Activated CD4-positive, alpha-beta T cell treated with anti-CD3 and anti-CD28 coated beads, Interleukin-2, amount 10 ng/mL, durations not matched to agents 7 days and 5 days (primary cell): ENCODE measurements at regions of chr12 and their contacts with region 1.

Region 1: GRCh38 chr12:110301065-110301806 is 20.2 kb downstream of the ATP2A2 start:
- DNase-seq: no peak
- H3K4me3 Mint-ChIP-seq: no peak overlapping the region
- H3K27ac Mint-ChIP-seq: no peak overlapping the region
- H3K4me1 Mint-ChIP-seq: peaks cover 38% of the 10 kb centered on the region
- H3K27me3 Mint-ChIP-seq: no peaks in the 10 kb centered on the region

Region 2: DNA sequence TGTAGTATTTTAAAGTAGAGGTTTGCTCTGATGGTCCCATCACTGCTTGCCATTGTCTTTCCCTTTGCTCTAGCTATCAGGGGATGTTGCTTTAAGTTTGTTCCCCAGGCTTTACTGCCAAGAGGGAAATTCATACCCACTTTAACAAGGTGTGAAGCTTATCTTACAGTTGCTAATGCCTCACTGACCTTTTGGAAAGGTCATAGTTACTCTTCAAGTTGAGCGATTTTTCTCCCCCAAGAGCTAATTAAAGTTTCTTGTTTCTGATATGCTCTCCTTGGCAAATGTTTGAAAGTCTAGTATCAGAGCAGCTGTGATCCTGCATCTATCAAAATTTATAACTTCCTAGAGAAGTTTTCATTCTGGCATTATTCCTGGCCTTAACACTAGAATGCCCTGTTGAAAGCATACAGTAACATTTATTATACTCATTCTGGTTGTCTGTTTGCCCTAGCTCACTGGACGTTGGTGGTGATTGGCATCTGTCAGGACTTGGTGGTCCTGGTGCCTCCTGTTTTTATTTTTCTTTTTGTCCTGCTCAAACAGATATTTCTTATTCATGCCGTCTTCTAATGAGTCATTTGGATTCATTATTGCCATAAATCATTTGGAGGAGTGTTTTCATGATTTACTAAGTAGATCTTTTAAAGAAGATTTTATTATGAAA is 12.1 kb before region 1 on chr12:
- CTCF ChIA-PET with region 1: interaction called, 11 read pairs
- POLR2A ChIA-PET with region 1: no interaction called
- DNase-seq: no peak
- H3K4me3 Mint-ChIP-seq: no peak overlapping the region
- H3K27ac Mint-ChIP-seq: no peak overlapping the region
- H3K4me1 Mint-ChIP-seq: peaks cover 51% of the 10 kb centered on the region
- H3K27me3 Mint-ChIP-seq: no peaks in the 10 kb centered on the region

Region 3: GRCh38 chr12:110311903-110312302 is 10.7 kb after region 1 on chr12:
- CTCF ChIA-PET with region 1: no interaction called
- POLR2A ChIA-PET with region 1: no interaction called
- DNase-seq: no peak
- H3K4me3 Mint-ChIP-seq: no peak overlapping the region
- H3K27ac Mint-ChIP-seq: peak overlapping the region; percentile 74
- H3K4me1 Mint-ChIP-seq: peaks cover 59% of the 10 kb centered on the region
- H3K27me3 Mint-ChIP-seq: no peaks in the 10 kb centered on the region